Activated T-helper 1 cell treated with anti-CD3 and anti-CD28 coated beads, Interleukin-12 subunit alpha, Interleukin-12 subunit beta, Interleukin-2, Interleukin-4 antibody, amounts not matched to agents 30 ng/mL and 10 ng/mL and 1 ng/mL, durations not matched to agents 14 hours and 24 hours and 36 hours (primary cell): ENCODE measurements at regions of chr22 and their contacts with region 1.

Region 1: DNA sequence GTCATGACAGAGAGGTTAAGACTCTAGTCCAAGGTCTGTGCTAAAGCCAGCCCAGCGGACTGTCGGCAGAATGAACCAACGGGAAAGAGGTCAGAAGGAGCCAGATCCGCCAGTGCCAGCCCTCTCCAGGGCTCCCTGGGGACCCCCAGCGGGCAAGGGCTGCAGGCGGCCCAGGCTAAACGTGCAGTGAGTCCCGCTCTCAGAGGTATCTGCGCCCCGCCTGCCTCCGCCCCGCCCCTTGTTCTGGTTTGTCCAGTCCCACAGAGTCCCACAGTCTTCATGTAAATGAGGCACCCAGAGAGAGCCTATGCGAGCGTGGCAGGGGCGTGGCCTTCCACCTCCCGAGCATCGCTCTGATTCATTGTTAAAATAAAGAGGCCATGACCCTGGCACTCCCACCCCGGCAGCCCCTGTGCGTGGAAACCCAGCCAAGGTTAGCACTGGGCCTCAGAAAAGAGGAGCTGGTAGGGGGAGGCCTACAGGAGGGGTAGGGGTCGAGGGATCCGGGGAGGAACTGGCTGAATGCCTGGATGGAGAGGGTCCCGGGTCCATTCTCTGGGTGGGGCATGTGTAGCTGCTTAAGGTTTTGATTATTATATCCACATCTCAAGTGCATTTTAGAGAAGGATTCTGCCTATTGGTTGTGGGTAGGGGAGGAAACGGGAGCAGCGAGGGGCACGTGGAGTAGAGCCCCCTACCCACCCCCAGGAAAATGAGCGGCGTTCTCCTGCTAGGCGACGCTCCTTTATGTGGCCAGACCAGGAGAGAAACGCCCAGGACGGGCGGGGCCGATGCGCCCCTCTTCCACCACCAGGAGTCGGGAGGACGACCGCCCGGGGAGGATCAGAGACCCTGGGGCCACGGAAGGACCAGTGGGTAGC is at the start of gene TRIOBP:
- DNase-seq: peak; percentile 85
- H3K4me3 Mint-ChIP-seq: peak within 1 kb of the TSS; percentile 65
- H3K27ac Mint-ChIP-seq: peak within 1 kb of the TSS; percentile 58
- H3K4me1 Mint-ChIP-seq: peaks cover 16% of the 10 kb centered on the region
- H3K27me3 Mint-ChIP-seq: no peaks in the 10 kb centered on the region
- total RNA-seq, gene TRIOBP: 32.7 and 32.9 TPM in 2 replicates

Region 2: DNA sequence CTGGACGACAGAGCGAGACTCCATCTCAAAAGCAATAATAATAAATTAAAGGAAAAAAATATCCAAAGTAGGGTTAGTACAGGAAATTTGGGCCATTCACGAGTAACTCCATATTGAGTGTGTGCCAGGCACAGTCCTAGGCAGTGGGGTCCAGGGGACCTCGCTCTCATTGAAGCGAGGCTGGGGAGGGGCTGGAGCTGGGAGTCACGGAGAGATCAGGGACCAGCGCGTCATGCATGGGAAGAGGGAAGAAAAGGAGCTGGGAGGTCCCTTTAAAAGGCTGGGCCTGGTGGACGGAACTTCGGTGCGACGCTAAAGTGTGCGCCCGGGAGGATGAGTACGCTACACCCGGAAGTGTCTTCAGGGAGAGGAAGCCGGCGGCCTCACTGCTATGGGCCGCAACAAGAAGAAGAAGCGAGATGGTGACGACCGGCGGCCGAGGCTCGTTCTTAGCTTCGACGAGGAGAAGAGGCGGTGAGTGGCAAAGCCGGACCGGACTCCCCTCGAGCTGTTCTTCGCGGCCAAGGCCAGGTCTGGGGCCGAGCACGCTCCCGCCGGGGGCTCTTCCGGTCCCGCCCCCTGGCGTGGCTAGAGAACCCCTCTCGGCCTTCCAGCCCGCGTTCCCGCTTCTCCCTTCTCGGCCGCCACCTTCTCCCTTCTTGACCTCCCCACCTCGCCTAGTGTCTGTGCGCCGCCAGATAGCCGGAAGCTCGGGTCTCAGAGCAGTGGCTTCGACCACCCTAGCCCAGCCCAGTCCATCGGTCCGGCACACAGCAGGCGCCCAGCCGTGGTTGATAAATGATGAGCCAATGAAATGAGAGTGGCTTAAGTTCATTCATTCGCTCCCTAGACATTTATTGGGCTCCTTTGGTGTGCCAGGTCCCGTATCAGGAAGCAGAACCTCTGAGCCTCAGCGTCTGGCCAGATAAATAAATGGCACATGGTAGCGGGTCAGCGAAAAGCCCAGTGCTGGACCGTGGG is 10.6 kb before region 1 on chr22 and contains the start of gene NOL12:
- intact Hi-C with region 1: loop called (anchors 1 kb)
- DNase-seq: peak; percentile 74
- H3K4me3 Mint-ChIP-seq: peak within 1 kb of the TSS; percentile 96
- H3K27ac Mint-ChIP-seq: peak within 1 kb of the TSS; percentile 97
- H3K4me1 Mint-ChIP-seq: peaks cover 24% of the 10 kb centered on the region
- H3K27me3 Mint-ChIP-seq: no peaks in the 10 kb centered on the region
- total RNA-seq, gene NOL12: 67.8 and 70.0 TPM in 2 replicates